Transverse colon (tissue), 4 donors: ENCODE measurements at regions of chr4 and their contacts with region 1.

Region 1: GRCh38 chr4:140609548-140610425 is 41.0 kb upstream of the UCP1 start:
- DNase-seq: no peak
- H3K4me3 ChIP-seq: no peak overlapping the region
- H3K27ac ChIP-seq: no peak overlapping the region
- H3K4me1 ChIP-seq: peaks cover 0 to 3% (median 0%) of the 10 kb centered on the region in 4 donors
- H3K27me3 ChIP-seq: no peaks in the 10 kb centered on the region
- CTCF ChIP-seq: peak in 4 of 5 experiments; percentile 31 to 49 (median 38)
- EP300 ChIP-seq: no peak
- POLR2A ChIP-seq: no peak

Region 2: GRCh38 chr4:138833974-138834373 is 1775.8 kb before region 1 on chr4:
- in situ Hi-C with region 1: no loop called
- intact Hi-C with region 1: loop called (anchors 5 kb)
- DNase-seq: no peak
- H3K4me3 ChIP-seq: no peak overlapping the region
- H3K27ac ChIP-seq: no peak overlapping the region
- H3K4me1 ChIP-seq: no peaks in the 10 kb centered on the region
- H3K27me3 ChIP-seq: no peaks in the 10 kb centered on the region
- CTCF ChIP-seq: no peak
- EP300 ChIP-seq: no peak
- POLR2A ChIP-seq: no peak

Region 3: DNA sequence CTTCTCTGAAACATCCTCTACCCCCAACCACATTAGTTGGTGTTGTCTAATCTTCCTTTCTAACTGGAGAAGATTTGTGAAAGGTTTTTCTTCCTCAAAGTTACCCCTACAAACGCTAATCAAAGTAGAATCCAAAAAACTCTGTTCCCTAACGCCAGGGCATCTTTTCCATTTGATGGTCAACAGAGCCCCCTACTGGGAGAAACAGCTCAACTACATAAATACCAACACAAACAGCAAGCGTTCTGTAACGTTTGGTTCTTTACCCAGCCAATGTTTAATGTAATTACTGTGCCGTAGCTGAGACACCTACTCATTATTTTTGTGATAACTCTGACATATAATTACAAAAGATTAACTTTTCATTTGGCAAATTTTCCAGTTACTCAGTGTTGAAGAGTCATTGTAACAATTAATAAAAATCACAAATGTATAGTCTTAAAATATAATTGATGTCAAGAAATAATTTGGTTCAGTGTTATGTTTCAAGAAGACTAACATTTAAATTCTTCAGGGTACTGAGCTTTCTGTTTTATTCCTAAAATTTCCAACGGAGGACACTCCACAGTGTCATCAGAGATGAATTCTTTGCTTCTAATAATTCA is 241.3 kb after region 1 on chr4:
- in situ Hi-C with region 1: loop called in 1 of 4 experiments (anchors 10 kb)
- intact Hi-C with region 1: no loop called
- DNase-seq: peak; percentile 42
- H3K4me3 ChIP-seq: no peak overlapping the region
- H3K27ac ChIP-seq: no peak overlapping the region
- H3K4me1 ChIP-seq: peaks cover 0 to 3% (median 0%) of the 10 kb centered on the region in 4 donors
- H3K27me3 ChIP-seq: no peaks in the 10 kb centered on the region
- CTCF ChIP-seq: peak; percentile 70 to 83 (median 77)
- EP300 ChIP-seq: no peak
- POLR2A ChIP-seq: no peak

Region 4: DNA sequence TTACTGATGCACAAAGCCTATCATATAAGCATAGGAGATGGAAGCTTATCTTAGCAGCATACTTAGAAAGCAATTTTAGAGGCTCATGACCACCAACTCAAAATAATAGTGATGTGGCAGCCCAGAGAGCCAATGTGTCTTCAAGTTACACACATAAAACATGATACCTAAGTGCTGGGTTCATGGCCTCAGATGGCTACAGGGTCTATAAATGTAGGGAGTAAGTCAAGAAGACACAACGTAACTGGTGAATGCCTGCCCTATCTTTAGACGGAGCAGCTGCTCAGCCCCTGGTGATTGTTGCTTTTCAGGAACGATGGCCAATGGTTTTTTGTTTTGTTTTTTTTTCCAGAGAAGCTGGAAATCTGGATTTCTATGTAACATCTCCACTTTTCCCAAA is 480.7 kb after region 1 on chr4:
- in situ Hi-C with region 1: no loop called
- intact Hi-C with region 1: no loop called
- DNase-seq: no peak
- H3K4me3 ChIP-seq: no peak overlapping the region
- H3K27ac ChIP-seq: no peak overlapping the region
- H3K4me1 ChIP-seq: no peaks in the 10 kb centered on the region
- H3K27me3 ChIP-seq: no peaks in the 10 kb centered on the region
- CTCF ChIP-seq: no peak
- EP300 ChIP-seq: no peak
- POLR2A ChIP-seq: no peak